Activated T-helper 2 cell treated with anti-CD3 and anti-CD28 coated beads, Interferon-gamma antibody, Interleukin-2, Interleukin-4, amounts not matched to agents 10 μg/mL and 5 μg/mL and 100 μg/mL, durations not matched to agents 14 hours and 24 hours and 36 hours (primary cell): ENCODE measurements at regions of chr16 and their contacts with region 1.

Region 1: GRCh38 chr16:5071681-5072333 is at the start of gene ALG1:
- DNase-seq: peak; percentile 88
- H3K4me3 Mint-ChIP-seq: peak within 1 kb of the TSS; percentile 91
- H3K27ac Mint-ChIP-seq: peak within 1 kb of the TSS; percentile 89
- H3K4me1 Mint-ChIP-seq: peaks cover 17% of the 10 kb centered on the region
- H3K27me3 Mint-ChIP-seq: peaks cover 3% of the 10 kb centered on the region
- total RNA-seq, gene ALG1: 29.4 and 35.0 TPM in 2 replicates

Region 2: DNA sequence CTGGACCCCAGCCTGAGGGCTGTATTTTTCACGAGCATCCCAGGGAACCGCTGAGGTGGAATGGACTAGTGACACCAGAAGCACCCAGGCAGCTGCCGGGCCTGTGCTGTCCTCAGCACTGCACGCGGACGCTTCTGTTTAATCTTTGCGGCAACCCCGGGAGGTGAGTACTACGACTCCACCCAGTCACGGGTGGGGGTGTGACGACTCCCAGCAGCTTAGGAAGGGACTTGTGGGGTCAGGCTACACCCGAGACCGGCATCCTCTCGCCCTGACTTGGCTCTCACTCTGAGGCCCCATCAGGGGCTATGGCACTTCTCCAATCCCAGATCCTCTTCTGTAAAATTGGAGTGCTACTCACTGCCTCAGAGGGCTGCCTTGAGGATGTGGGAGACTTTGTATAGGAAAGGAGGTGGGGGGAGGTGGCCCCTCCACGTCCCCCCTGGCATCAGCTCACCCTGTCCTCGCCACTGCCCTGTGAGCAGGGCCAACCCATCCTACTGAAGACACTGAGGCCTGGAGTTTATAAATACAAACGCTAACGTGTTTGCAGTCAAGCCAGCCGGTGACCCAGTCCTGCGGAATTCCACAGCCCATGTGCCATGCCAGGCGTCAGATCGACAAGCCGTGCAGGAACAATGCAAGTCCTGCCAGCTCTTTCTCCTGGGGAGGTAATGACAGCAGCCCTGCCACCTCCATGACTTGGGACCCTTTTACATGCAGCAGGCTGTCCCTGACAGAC is 179.3 kb before region 1 on chr16:
- intact Hi-C with region 1: no loop called
- DNase-seq: no peak
- H3K4me3 Mint-ChIP-seq: no peak overlapping the region
- H3K27ac Mint-ChIP-seq: no peak overlapping the region
- H3K4me1 Mint-ChIP-seq: no peaks in the 10 kb centered on the region
- H3K27me3 Mint-ChIP-seq: no peaks in the 10 kb centered on the region

Region 3: DNA sequence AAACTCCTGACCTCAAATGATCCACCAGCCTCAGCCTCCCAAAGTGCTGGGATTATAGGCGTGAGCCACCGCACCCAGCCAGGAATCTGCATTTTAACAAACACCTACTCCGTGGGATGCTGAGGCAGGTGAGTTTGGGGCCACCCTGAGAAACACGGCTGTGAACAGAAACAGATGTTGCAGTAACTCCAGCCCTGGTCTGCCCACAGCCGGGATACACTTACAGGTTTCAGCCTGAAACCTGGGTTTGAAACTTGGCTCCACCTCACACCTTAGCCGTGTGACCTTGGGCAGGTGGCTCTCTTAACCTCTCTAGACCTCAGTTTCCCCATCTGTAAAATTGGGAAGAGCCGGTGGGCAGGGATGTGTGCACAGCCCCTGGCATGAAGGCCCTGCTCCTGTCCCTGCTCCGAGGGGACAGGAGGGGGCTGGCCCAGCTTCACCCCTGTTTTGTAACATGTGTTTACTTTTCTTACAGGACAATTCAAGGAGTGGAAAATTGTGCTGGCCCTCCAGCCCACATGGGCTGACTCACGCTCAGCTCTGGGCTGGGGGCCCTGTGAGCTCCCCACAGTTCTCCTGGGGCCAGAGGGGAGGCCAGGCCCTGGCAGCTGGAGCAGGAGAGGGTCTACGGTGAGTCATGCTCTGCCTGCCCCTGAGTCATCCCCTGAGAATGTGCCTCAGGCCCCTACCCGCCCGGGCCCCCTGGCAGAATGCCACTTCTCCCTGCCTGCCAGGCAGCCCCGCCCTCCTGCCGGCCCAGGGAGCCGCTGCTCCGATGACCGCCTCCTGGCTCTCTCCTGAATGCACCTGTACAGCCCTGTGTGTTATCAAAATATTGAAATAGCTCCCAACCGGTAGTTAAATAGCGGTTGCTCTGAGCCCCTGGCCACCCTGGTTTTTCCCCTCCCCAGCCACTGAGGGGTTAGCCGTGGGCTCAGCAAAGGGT is 127.2 kb before region 1 on chr16:
- intact Hi-C with region 1: no loop called
- DNase-seq: no peak
- H3K4me3 Mint-ChIP-seq: no peak overlapping the region
- H3K27ac Mint-ChIP-seq: no peak overlapping the region
- H3K4me1 Mint-ChIP-seq: no peaks in the 10 kb centered on the region
- H3K27me3 Mint-ChIP-seq: no peaks in the 10 kb centered on the region

Region 4: DNA sequence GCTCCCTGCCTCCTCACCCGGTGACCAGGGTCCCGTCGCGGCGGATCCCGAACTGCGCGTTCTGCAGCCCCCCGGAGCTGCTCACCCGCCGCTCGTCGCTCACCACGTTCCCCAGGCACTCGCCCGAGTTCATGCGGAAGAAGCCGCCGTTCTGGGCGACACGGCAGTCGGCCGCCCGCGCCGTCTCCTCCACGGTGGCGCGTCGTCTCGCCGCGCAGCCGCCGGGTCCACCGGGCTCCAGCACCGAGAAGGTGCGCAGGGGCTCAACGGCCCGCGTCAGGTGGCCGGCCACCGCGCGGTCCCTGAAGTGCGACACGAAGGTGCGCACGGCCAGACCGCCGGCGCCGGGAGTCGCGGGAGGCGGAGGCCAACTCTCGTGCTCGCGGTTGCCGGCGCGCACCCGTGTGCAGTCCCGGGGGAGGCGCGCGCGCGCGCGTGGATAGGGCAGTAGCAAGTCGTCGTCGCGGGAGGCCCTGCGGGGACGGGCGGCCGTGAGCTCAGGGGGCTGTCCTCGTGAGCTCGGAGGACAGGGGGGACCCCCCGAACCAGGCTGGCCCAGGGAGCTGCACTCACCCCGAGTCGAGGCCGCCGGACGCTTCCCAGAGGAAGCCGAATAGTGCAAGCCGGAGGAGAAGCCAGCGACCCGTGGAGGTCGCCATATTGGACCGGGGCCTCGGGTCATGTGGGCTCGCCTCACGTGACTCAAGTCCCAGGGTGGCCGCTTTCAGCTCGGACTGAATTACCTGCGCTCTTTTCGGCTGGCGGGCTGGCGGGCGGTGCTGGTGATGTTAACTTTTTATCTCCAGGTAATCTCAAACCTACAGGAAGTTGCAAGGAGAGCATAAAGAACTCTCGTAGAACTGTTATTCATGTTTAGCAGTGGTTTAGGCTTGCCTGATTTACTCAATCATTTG is 38.3 kb before region 1 on chr16 and contains the start of gene NAGPA:
- intact Hi-C with region 1: loop called (anchors 5 kb)
- DNase-seq: peak; percentile 79
- H3K4me3 Mint-ChIP-seq: peak within 1 kb of the TSS; percentile 82
- H3K27ac Mint-ChIP-seq: peak within 1 kb of the TSS; percentile 68
- H3K4me1 Mint-ChIP-seq: peaks cover 11% of the 10 kb centered on the region
- H3K27me3 Mint-ChIP-seq: no peaks in the 10 kb centered on the region
- total RNA-seq, gene NAGPA: 9.8 and 11.1 TPM in 2 replicates